Activated CD8-positive, alpha-beta T cell treated with anti-CD3 and anti-CD28 coated beads for 36 hours (primary cell): ENCODE measurements at regions of chr1 and their contacts with region 1.

Region 1: GRCh38 chr1:110816930-110817329 is 56.0 kb upstream of the CD53 start:
- DNase-seq: no peak
- ATAC-seq: no peak
- H3K4me3 Mint-ChIP-seq: no peak overlapping the region
- H3K27ac Mint-ChIP-seq: no peak overlapping the region
- H3K4me1 Mint-ChIP-seq: no peaks in the 10 kb centered on the region
- H3K27me3 Mint-ChIP-seq: no peaks in the 10 kb centered on the region
- CTCF ChIP-seq: no peak

Region 2: GRCh38 chr1:110746579-110747160 is 70.3 kb before region 1 on chr1:
- CTCF ChIA-PET with region 1: no interaction called
- POLR2A ChIA-PET with region 1: no interaction called
- intact Hi-C with region 1: no loop called
- DNase-seq: peak; percentile 70
- ATAC-seq: peak; percentile 47
- H3K4me3 Mint-ChIP-seq: no peak overlapping the region
- H3K27ac Mint-ChIP-seq: no peak overlapping the region
- H3K4me1 Mint-ChIP-seq: no peaks in the 10 kb centered on the region
- H3K27me3 Mint-ChIP-seq: peaks cover 6% of the 10 kb centered on the region
- CTCF ChIP-seq: no peak

Region 3: GRCh38 chr1:110829955-110830553 is 13.1 kb after region 1 on chr1:
- CTCF ChIA-PET with region 1: interaction called, 25 read pairs
- POLR2A ChIA-PET with region 1: no interaction called
- intact Hi-C with region 1: no loop called
- DNase-seq: peak; percentile 22
- ATAC-seq: peak; percentile 97
- H3K4me3 Mint-ChIP-seq: no peak overlapping the region
- H3K27ac Mint-ChIP-seq: no peak overlapping the region
- H3K4me1 Mint-ChIP-seq: peaks cover 9% of the 10 kb centered on the region
- H3K27me3 Mint-ChIP-seq: no peaks in the 10 kb centered on the region
- CTCF ChIP-seq: peak; percentile 92

Region 4: GRCh38 chr1:110962892-110963690 is 146.2 kb after region 1 on chr1:
- CTCF ChIA-PET with region 1: no interaction called
- POLR2A ChIA-PET with region 1: no interaction called
- intact Hi-C with region 1: no loop called
- DNase-seq: peak; percentile 70
- ATAC-seq: peak; percentile 34
- H3K4me3 Mint-ChIP-seq: peak overlapping the region; percentile 84
- H3K27ac Mint-ChIP-seq: peak overlapping the region; percentile 97
- H3K4me1 Mint-ChIP-seq: peaks cover 37% of the 10 kb centered on the region
- H3K27me3 Mint-ChIP-seq: peaks cover 2% of the 10 kb centered on the region
- CTCF ChIP-seq: no peak